ENCODE measurements at regions of chr3 and their contacts with region 1.

Region 1: DNA sequence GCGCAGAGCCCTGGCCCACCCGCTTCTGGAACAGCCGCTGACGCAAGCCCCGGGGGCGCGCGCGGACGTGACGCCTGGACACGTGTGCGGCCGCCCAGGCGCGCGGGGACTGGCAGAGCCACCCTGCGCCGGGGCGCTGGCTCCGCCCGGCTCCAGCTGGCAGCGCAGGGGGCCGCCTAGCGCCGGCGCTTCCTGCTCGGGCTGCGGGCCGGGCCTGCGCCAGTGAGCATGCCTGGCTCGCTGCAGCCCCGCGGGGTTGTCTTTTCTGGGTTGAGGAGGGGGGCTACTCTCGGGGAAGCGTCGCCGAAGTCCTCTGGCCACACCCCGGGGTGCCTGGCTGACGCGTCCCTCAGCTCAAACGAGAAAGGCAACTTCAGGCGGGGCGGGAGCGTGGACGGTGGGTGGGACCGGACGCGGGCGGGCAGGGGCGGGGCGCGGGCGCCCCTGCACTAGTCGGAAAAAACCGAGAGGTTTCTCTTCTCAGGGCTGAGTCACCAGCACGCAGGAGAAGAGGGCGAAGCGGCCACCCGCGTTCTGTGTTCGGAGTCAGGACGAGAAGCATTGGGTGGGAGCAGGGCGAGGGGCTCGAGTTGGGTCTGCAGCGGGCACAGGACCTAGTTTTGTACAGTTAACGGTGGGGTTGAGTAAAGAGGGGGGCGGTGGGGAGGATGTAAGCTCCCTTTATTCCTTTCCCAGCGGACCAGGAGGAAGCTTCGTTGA is at the start of gene SIAH2:
- DNase-seq: peak; percentile 94
- ATAC-seq: peak; percentile 85
- H3K4me3 Mint-ChIP-seq: peak within 1 kb of the TSS; percentile 92
- H3K27ac Mint-ChIP-seq: peak within 1 kb of the TSS; percentile 100
- H3K4me1 Mint-ChIP-seq: peaks cover 46% of the 10 kb centered on the region
- H3K27me3 Mint-ChIP-seq: no peaks in the 10 kb centered on the region
- total RNA-seq, gene SIAH2: 31.5 to 32.3 TPM

Region 2: DNA sequence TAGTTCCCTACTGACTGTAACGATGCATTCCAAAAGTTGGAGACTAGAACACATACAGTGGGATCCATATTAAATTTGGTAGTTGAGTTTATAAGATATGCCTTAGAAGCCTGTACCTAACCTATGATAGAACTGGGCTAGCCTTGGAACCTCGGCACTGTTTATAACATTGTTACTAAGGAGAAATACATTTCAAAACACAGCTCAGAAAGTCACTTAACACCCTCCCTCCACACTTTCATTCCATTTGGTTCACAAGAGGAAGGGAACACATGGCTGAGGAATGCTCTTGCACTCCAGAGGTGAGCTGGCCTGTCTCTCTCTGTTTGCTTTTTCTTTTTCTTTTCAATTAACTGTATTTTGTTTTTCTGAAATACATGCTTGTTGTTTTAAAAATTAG is 403.9 kb before region 1 on chr3:
- CTCF ChIA-PET with region 1: no interaction called
- POLR2A ChIA-PET with region 1: no interaction called
- DNase-seq: no peak
- ATAC-seq: no peak
- H3K4me3 Mint-ChIP-seq: no peak overlapping the region
- H3K27ac Mint-ChIP-seq: no peak overlapping the region
- H3K4me1 Mint-ChIP-seq: no peaks in the 10 kb centered on the region
- H3K27me3 Mint-ChIP-seq: peaks cover 2% of the 10 kb centered on the region

Region 3: DNA sequence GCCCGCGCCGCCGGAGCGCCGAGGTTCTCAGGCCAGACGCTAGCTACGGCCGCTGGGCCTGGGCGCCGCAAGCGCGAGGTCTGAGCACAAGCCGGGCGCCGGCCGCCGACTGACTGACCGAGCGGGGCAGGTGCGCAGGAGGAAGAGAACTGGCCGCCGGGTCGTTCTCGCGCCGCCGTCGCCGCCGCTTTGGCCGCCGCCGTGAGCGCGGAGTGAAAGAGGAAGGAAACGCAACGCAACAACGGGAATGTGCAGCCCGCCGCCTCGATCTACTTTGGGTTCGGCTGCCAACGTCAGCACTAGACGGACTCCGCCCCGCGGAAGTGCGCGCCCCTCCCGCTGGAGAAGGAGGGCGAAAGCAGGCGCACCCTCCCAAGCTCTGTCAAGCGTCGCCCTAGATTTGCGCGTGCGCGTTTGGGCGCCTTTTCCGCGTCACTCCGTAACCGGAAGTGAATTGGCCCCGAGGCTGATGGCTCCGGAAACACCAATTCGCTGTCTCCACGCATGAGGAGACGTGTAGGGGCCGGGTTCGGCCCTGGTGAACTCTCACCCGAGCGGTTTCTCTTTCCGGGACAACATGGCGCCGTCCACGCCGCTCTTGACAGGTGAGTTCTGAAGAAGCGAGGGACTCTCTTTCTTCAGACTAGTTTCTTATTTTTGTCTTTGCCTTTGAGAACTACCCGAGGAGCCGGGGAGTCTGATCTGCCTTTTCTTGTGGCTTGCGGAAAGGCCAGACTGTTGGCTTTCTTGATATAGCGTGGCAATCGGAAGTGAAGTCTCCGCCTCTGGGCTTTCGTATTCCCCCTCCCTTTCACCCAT is 216.8 kb before region 1 on chr3 and contains the starts of genes EIF2A and SERP1:
- CTCF ChIA-PET with region 1: interaction called, 9 read pairs
- POLR2A ChIA-PET with region 1: interaction called, 77 read pairs
- DNase-seq: peak; percentile 99
- ATAC-seq: peak; percentile 93
- H3K4me3 Mint-ChIP-seq: peak within 1 kb of the TSS; percentile 94
- H3K27ac Mint-ChIP-seq: peak within 1 kb of the TSS; percentile 92
- H3K4me1 Mint-ChIP-seq: peaks cover 51% of the 10 kb centered on the region
- H3K27me3 Mint-ChIP-seq: no peaks in the 10 kb centered on the region
- total RNA-seq, gene EIF2A: 77.0 to 89.0 TPM
- total RNA-seq, gene SERP1: 83.4 to 87.3 TPM

Region 4: GRCh38 chr3:150721285-150722130 is 41.8 kb before region 1 on chr3:
- CTCF ChIA-PET with region 1: interaction called, 87 read pairs
- POLR2A ChIA-PET with region 1: interaction called, 30 read pairs
- DNase-seq: no peak
- ATAC-seq: peak; percentile 77
- H3K4me3 Mint-ChIP-seq: no peak overlapping the region
- H3K27ac Mint-ChIP-seq: no peak overlapping the region
- H3K4me1 Mint-ChIP-seq: peaks cover 13% of the 10 kb centered on the region
- H3K27me3 Mint-ChIP-seq: no peaks in the 10 kb centered on the region

Region 5: GRCh38 chr3:150751753-150752263 is 11.5 kb before region 1 on chr3:
- CTCF ChIA-PET with region 1: interaction called, 5 read pairs
- POLR2A ChIA-PET with region 1: interaction called, 61 read pairs
- DNase-seq: no peak
- ATAC-seq: no peak
- H3K4me3 Mint-ChIP-seq: no peak overlapping the region
- H3K27ac Mint-ChIP-seq: peak overlapping the region; percentile 46
- H3K4me1 Mint-ChIP-seq: peaks cover 67% of the 10 kb centered on the region
- H3K27me3 Mint-ChIP-seq: no peaks in the 10 kb centered on the region

Region 6: DNA sequence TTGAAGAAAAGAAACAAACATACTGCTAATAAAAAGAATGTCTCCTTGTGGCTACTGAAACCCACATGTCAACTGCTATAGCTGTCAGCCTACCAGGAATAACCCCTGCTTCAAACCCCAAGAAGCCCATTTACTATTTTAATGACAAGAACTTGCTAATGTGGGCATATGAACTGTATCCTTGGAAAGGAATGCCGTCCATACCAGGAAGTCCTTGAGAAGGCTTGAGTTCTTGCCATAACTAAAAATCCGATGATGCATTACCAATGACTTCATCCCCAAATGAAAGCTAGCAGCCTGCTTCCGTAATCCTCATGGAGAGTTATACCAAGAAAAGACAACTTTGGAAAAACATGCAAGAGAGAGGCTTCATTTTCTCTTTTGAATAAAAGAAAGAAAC is 107.1 kb after region 1 on chr3:
- CTCF ChIA-PET with region 1: interaction called, 12 read pairs
- POLR2A ChIA-PET with region 1: no interaction called
- DNase-seq: no peak
- ATAC-seq: no peak
- H3K4me3 Mint-ChIP-seq: no peak overlapping the region
- H3K27ac Mint-ChIP-seq: no peak overlapping the region
- H3K4me1 Mint-ChIP-seq: peaks cover under 1% of the 10 kb centered on the region
- H3K27me3 Mint-ChIP-seq: peaks cover 14% of the 10 kb centered on the region